GM10248 (cell line): ENCODE measurements at regions of chr7 and their contacts with region 1.

Region 1: DNA sequence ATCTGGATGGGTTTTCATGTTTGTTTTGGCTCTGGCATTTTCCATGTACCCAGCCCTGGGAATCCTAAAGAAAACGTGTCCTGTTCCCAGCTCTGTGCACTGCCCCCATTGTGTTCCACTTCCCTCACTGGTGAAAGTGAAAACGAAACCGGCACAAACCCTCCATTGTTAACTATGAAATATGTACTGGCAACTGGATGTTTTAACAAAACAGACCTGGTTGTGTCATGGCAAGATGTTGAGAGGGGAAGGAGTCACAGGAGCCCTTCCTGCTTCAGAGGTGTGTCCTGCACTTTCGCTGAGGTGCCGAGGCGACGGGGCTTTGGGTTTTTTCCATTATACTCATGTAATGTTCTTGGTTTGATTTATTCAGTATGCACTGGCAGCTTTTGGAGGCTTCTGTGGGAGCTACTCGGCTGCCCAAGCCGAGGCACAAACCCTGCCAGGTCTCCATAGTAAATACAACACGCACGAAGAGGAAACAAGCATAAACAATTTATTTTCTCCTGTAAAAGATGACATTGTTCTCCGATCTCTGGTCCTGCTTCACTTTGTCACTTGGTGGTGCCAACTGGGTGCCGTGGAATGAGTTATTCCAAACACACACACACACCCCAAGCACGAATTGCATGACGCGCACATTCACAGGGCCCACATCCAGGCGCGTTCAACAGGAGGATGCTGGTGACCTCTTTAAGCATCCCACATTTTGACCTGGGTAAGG is 118.2 kb downstream of the CDK6 start:
- DNase-seq: peak; percentile 34
- CTCF ChIP-seq: no peak

Region 2: DNA sequence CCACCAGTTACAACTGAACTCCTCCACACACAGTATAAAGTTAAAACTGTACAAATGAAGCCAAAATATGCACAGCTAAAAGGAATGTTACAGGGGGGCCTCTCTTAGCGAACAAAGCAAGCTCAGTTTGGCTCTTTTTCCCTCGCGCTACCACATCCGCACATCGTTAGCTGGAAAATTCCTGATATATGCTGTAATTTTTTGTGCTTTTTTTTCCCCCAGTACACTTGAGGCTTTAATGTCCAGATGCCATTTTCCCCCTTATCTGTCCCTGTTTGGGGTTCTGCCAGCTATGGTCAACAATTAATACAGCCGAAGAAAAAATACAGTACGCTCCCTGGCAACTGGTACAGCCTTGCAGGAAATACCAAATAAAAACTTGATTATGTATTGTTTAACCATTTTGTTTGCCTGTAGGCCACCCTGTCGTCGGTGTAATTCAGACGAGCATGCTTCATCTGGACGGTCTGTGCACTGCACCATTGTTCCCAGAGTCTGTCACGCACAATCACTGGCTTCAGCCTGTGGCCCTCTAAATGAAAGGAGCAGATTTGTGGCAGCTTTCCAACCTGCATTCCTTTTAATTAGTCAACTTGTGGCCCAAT is 19.8 kb before region 1 on chr7:
- CTCF ChIA-PET with region 1: interaction called, 13 read pairs
- POLR2A ChIA-PET with region 1: no interaction called
- DNase-seq: no peak
- CTCF ChIP-seq: no peak

Region 3: GRCh38 chr7:92737706-92738105 is 19.6 kb after region 1 on chr7:
- CTCF ChIA-PET with region 1: interaction called, 20 read pairs
- POLR2A ChIA-PET with region 1: no interaction called
- DNase-seq: peak; percentile 30
- CTCF ChIP-seq: no peak